SK-N-SH (cell line): ENCODE measurements at regions of chr2 and their contacts with region 1.

Region 1: DNA sequence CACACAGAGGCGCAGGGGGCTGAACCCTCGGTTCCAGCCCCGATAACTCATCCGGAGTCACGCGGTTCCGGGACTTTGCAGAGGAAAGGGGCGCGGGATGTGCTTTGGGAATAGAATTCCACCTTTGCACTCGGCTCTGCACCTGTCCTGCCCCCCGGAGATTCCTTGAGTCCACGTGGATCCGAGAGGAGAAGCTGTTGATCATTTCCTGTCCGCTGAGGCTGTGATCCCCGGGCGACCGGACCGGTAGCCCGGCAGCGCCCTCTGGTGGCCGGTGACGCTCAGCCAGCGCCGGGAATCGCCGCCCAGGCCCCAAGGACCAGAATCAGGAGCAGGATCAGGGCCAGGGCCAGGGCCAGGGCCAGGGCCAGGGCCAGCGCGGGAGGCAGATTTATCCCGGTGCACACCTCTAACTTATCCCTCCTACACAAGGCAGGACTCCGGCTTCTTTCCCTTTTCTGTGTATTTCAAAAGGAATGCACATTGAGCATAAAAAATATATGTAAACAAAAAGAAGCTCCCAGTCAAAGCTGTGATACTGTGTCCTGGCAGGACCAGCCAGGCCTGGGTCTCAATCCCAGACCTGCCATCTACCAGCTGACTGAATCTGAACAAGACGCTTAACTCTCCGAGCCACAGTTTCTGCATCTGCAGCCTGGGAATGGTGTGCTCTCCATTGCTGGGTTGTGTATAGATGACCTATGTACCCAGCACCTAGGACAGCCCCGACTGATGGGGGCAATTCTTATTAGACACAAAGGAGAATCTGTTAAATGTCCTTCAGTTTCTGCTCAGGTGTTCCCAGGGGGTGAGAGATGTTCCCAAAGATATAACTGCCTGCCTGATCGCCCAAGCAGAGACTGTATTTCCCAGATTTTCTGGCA is 8.5 kb upstream of the SPATA3 start:
- DNase-seq: peak; percentile 96
- H3K4me3 ChIP-seq: peak overlapping the region; percentile 50 to 63
- H3K27ac ChIP-seq: no peak overlapping the region
- H3K4me1 ChIP-seq: peaks cover 0 to 5% of the 10 kb centered on the region in 2 experiments; a peak in 1 of 4 replicates
- H3K27me3 ChIP-seq: peaks cover 6% of the 10 kb centered on the region; the same call in 1 of the 2 replicates
- CTCF ChIP-seq: peak; percentile 84
- EP300 ChIP-seq: no peak
- RAD21 ChIP-seq: peak; percentile 92

Region 2: DNA sequence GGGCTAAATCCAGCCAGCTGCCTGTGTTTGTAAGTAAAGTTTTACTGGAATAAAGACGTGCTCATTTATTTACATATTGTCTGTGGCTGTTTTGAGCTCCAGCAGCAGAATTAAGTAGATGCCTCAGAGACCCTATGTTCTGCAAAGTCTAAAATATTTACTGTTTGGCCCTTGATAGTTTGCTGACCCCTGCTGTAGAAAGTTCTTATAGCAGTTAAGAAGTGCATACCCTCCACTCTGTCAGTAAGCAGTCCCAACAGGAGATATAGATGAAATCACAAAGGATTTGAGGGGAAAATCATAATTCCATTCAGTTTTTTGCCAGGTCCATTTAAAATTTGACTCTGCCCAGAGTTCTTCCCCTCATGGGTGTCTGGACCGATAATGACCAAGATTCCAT is 172.8 kb before region 1 on chr2:
- CTCF ChIA-PET with region 1: interaction called, 28 read pairs
- POLR2A ChIA-PET with region 1: no interaction called
- DNase-seq: no peak
- H3K4me3 ChIP-seq: no peak overlapping the region
- H3K27ac ChIP-seq: no peak overlapping the region
- H3K4me1 ChIP-seq: no peaks in the 10 kb centered on the region
- H3K27me3 ChIP-seq: no peaks in the 10 kb centered on the region
- CTCF ChIP-seq: peak; percentile 59
- EP300 ChIP-seq: no peak
- RAD21 ChIP-seq: peak; percentile 43

Region 3: DNA sequence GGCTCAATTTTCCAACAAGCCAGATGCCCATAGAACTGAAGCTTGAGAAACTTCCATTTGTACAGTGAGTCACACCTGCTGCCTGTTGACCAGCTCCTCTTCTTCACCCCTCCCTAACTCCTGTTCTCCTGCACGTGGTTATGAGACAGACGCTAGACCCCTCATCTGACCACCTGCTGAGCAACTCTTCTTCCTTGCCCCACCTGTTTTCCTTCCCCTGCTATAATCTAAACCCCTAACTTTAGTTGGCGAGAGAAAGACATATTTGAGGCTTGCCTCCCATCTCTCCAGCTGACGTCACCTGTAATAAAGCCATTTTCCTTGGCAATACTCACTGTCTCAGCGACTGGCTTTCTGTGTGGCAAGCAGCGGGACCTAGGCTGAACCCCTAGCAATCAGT is 144.9 kb before region 1 on chr2:
- CTCF ChIA-PET with region 1: interaction called, 106 read pairs
- POLR2A ChIA-PET with region 1: no interaction called
- DNase-seq: no peak
- H3K4me3 ChIP-seq: no peak overlapping the region
- H3K27ac ChIP-seq: no peak overlapping the region
- H3K4me1 ChIP-seq: no peaks in the 10 kb centered on the region
- H3K27me3 ChIP-seq: no peaks in the 10 kb centered on the region; the same call in 1 of the 2 replicates
- CTCF ChIP-seq: no peak
- EP300 ChIP-seq: no peak
- RAD21 ChIP-seq: no peak

Region 4: DNA sequence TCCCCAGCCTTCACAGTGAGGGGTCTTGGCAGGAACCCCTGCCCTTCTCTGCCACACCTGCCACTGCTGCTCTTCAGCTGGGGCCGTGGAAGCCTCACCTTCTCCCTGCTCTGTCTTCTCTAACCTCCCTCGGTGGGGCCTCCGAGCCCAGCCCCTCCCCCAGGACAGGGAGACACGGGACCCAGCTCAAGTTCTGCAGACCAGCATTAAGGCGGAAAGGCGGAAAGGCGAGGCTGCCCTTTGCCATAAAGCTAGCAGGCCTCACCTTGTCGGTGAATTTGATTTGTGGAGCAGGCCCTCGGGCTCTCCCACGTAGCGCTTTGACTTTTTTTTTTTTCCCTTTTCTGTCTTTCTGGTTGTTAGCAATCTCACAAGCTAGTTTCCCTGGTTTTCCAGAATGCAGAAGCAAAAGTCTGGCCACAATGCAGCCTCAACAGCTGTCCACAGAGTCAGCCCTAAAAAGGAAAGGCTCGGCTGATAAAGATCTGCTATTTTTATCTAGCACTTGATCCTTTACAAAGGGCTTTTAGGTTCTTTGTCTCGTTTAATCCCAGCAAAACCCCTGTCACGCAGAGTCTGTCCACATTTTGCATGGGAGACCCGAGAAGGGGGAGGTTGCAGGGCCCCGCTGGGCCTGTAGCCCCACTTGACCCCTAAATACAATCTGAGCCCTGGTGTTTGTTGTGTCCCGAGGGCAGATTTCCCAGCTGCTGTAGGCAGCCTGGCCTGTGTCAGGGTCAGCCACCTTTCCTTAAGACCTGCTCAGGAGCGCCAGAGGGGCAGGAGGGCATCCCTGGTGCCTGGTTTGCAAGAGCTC is 116.6 kb before region 1 on chr2:
- CTCF ChIA-PET with region 1: interaction called, 15 read pairs
- POLR2A ChIA-PET with region 1: interaction called, 3 read pairs
- DNase-seq: peak; percentile 76
- H3K4me3 ChIP-seq: no peak overlapping the region; a peak in 1 of 4 replicates
- H3K27ac ChIP-seq: peak overlapping the region in 1 of 2 experiments; percentile 99; a peak in 2 of 4 replicates
- H3K4me1 ChIP-seq: peaks cover 40 to 77% of the 10 kb centered on the region in 2 experiments
- H3K27me3 ChIP-seq: no peaks in the 10 kb centered on the region
- CTCF ChIP-seq: no peak
- EP300 ChIP-seq: peak in 1 of 2 experiments; percentile 48; a peak in 2 of 4 replicates
- RAD21 ChIP-seq: no peak

Region 5: DNA sequence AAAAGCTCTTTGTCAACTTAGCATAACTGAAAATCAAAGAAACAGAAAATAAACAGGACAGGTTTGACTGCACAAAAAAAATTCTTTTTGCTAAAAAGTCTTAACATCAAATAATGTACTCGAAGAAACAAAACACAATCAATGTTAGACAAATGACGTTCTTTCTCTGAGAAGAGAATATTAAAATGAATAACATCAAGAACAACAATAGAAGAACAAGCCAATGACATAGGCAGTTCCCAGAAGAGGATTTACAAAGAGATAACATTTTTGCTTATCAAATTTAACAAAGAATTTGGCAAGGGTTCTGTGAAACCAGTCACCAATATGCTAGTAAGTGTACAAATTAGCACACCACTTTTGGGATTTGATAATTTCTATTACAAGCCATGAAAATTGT is 68.1 kb before region 1 on chr2:
- CTCF ChIA-PET with region 1: interaction called, 25 read pairs
- POLR2A ChIA-PET with region 1: no interaction called
- DNase-seq: no peak
- H3K4me3 ChIP-seq: no peak overlapping the region
- H3K27ac ChIP-seq: no peak overlapping the region
- H3K4me1 ChIP-seq: no peaks in the 10 kb centered on the region
- H3K27me3 ChIP-seq: peaks cover 5% of the 10 kb centered on the region; the same call in 1 of the 2 replicates
- CTCF ChIP-seq: no peak
- EP300 ChIP-seq: no peak
- RAD21 ChIP-seq: no peak

Region 6: GRCh38 chr2:231000211-231000904 is 13.0 kb after region 1 on chr2:
- CTCF ChIA-PET with region 1: interaction called, 18 read pairs
- POLR2A ChIA-PET with region 1: no interaction called
- DNase-seq: peak; percentile 43
- H3K4me3 ChIP-seq: no peak overlapping the region
- H3K27ac ChIP-seq: no peak overlapping the region
- H3K4me1 ChIP-seq: no peaks in the 10 kb centered on the region
- H3K27me3 ChIP-seq: peaks cover 14% of the 10 kb centered on the region; the same call in 1 of the 2 replicates
- CTCF ChIP-seq: no peak
- EP300 ChIP-seq: no peak
- RAD21 ChIP-seq: no peak

Region 7: GRCh38 chr2:231470246-231470900 is 483.0 kb after region 1 on chr2:
- CTCF ChIA-PET with region 1: no interaction called
- POLR2A ChIA-PET with region 1: no interaction called
- DNase-seq: no peak
- H3K4me3 ChIP-seq: no peak overlapping the region
- H3K27ac ChIP-seq: no peak overlapping the region
- H3K4me1 ChIP-seq: peaks cover 0 to 2% of the 10 kb centered on the region in 2 experiments; a peak in 1 of 4 replicates
- H3K27me3 ChIP-seq: no peaks in the 10 kb centered on the region
- CTCF ChIP-seq: no peak
- EP300 ChIP-seq: no peak
- RAD21 ChIP-seq: no peak